ENCODE measurements at regions of chr4 and their contacts with region 1.

Region 1: DNA sequence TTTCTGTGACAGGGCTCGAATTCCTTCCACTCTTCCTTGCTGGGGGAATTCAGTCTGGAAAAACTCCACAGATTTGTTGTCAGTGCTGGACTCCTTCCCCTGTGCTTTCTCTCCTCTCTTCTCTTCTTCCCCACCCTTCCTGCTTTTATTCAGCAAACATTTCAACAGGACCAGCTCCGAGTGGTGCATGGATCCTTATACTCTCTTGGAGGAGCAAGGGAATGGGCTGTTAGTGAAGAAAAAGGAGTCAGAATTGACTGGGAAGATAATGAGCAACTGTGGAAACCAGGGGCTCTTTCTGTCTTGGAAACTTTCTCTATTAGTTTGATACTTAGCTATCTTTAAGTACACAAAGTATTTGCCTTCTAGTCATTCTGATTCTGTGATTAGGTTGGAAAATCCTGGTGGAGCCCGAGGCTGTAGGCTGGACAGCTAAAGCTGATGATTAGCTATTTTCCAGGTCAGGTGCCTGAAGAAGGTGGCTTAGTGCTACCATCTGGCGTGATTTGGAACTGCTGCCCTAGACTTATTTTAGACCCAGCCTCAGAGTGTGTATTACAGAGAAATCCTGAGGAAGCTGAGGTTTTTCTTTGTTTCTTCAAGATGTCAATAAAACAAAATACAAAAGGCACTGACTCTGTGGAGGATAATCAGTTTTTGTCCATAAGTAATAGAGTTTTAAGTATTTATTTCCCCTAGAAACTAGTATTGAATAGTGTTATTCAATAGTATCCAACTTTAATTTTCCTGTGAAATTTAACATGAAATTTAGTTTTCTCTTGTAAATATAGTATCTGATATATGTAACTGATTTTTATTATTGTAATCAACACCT is 38.4 kb downstream of the NAP1L5 start:
- DNase-seq: peak in 1 of 2 donors; percentile 50
- ATAC-seq: peak; percentile 93 to 98 (median 95)
- H3K4me3 ChIP-seq: no peak overlapping the region
- H3K27ac ChIP-seq: peak overlapping the region; percentile 51
- H3K4me1 ChIP-seq: peaks cover 9% of the 10 kb centered on the region
- H3K27me3 ChIP-seq: no peaks in the 10 kb centered on the region
- CTCF ChIP-seq: peak; percentile 82

Region 2: DNA sequence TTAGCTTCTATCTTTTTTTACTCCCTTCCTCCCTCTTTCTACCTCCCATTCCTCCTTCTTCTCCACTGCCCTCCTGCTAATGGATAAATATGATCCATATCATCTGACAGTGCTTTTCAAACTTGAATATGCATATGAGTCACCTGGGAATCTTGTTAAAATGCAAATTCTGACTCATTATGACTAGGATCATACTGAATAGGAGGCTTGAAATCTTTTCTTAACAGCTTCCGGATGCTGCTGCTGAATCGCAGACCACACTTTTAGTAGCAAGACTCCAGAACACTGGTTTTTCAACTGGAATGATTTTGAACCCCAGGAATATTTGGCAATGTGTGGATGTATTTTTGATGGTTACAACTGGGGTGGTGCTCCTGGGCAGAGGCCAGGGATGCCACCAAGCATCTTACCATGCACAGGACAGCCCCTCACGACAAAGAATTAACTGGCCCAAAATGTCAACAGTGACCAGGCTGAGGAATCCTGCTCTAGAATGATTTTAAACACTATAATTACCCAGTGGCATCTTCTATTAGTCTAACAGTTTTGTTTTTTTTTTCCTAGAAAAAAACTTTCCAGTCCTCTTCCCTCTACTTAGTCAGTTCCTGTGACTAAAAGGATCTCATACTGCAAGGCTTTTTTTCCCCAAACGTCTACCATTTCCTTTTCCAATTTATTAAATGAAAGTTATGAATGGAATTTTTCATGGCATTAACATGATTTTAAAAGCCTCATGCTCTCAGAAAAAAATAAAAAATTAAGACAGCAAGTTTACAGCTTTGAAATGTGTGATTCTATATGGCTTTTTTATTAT is 125.1 kb before region 1 on chr4:
- intact Hi-C with region 1: loop called (anchors 1 to 2 kb)
- DNase-seq: no peak
- ATAC-seq: no peak
- H3K4me3 ChIP-seq: no peak overlapping the region
- H3K27ac ChIP-seq: no peak overlapping the region
- H3K4me1 ChIP-seq: no peaks in the 10 kb centered on the region
- H3K27me3 ChIP-seq: no peaks in the 10 kb centered on the region
- CTCF ChIP-seq: no peak

Region 3: DNA sequence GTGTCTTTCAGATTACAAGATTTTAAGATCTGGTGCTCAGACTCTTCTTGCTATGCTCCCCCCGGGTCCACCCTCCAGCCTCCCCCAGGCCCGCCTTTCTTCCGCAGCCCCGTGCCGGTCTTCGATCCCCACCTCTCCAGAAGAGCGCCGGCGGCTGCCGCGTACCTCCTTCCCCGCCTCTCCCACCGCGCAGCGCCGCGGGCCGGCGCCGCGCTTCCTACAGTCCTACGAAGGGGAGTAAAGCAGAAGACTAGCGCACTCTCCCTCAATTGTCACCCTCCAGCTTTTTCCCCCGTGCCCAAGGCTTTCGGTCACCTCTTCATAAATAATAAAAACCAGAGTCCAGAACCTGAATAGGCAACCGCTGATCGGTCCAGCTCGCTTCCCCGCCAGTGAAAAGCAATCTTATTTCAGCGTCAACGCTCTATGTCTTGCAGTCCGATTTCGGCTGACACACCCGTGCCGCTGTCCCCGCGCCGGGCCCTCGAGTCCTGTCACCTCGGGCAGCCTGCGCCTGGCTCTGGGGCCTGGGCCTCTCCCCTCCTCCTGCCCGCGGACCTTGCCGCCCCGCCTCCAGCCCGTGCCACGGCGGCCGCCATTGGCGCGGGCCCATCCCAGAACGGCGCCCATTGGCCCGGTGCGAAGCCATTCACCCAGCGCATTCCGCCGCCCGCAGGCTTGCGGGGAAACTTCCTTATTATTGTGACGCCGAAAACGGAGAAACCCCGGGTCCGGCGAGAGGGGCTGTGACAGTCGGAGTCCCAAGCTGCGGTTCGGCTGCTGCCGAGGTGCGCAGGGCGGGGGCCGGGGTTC is 67.3 kb before region 1 on chr4 and contains the start of gene HERC3:
- intact Hi-C with region 1: loop called in 1 of 2 experiments (anchors 10 kb)
- DNase-seq: peak; percentile 93 to 96
- ATAC-seq: peak; percentile 94 to 97 (median 96)
- H3K4me3 ChIP-seq: peak within 1 kb of the TSS; percentile 99
- H3K27ac ChIP-seq: peak within 1 kb of the TSS; percentile 98
- H3K4me1 ChIP-seq: peaks cover 22% of the 10 kb centered on the region
- H3K27me3 ChIP-seq: no peaks in the 10 kb centered on the region
- CTCF ChIP-seq: no peak
- total RNA-seq, gene HERC3: 17.7 to 35.8 (median 25.2) TPM

Region 4: GRCh38 chr4:88623097-88623496 is 36.2 kb before region 1 on chr4:
- intact Hi-C with region 1: no loop called
- DNase-seq: no peak
- ATAC-seq: peak in 3 of 4 donors; percentile 59 to 84 (median 63)
- H3K4me3 ChIP-seq: no peak overlapping the region
- H3K27ac ChIP-seq: no peak overlapping the region
- H3K4me1 ChIP-seq: peaks cover 28% of the 10 kb centered on the region
- H3K27me3 ChIP-seq: no peaks in the 10 kb centered on the region
- CTCF ChIP-seq: no peak